Activated T-helper 1 cell treated with anti-CD3 and anti-CD28 coated beads, Interleukin-12 subunit alpha, Interleukin-12 subunit beta, Interleukin-2, Interleukin-4 antibody, amounts not matched to agents 30 ng/mL and 10 ng/mL and 1 ng/mL, durations not matched to agents 14 hours and 24 hours and 36 hours (primary cell): ENCODE measurements at regions of chr2 and their contacts with region 1.

Region 1: GRCh38 chr2:55268907-55269644 is at the start of gene MTIF2:
- DNase-seq: peak; percentile 87
- H3K4me3 Mint-ChIP-seq: peak within 1 kb of the TSS; percentile 93
- H3K27ac Mint-ChIP-seq: peak within 1 kb of the TSS; percentile 85
- H3K4me1 Mint-ChIP-seq: peaks cover 14% of the 10 kb centered on the region
- H3K27me3 Mint-ChIP-seq: no peaks in the 10 kb centered on the region
- total RNA-seq, gene MTIF2: 42.3 and 44.1 TPM in 2 replicates

Region 2: DNA sequence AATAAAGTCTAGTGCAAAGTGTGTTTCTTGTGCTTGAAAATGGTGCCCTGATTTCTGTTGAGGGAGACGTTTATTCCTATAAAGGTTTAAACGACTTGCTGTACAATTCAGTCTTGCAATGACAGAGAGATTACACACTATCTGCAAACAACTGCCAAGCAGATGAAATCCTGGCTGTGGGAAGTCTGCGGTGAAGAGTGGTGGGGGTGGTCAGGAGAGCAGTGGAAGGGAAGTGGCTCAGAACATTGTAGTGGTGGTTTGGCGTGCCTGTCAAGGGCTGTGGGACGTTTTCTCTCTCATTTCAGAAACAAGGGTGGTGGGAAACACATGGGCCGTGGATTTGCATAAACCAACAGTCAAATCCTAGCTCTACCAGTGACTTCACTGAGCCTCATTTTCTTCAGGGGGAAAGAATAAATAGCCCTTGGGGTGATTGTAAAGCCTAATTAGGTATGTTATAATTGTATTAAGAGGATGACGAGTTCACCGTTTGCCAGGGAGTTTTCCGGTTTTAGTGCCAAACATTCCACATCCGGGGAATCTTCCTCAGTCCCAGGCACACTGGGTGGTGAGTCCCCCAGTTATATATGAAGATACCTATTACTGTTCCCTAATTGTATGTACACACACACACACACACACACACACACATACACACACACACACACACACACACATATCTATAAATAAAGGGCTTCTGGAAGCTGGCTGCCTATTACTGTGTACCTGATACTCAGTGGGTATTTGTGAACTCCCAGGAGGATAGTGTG is 698.0 kb before region 1 on chr2:
- intact Hi-C with region 1: no loop called
- DNase-seq: peak; percentile 84
- H3K4me3 Mint-ChIP-seq: peak overlapping the region; percentile 70
- H3K27ac Mint-ChIP-seq: peak overlapping the region; percentile 92
- H3K4me1 Mint-ChIP-seq: peaks cover 91% of the 10 kb centered on the region
- H3K27me3 Mint-ChIP-seq: peaks cover 2% of the 10 kb centered on the region

Region 3: DNA sequence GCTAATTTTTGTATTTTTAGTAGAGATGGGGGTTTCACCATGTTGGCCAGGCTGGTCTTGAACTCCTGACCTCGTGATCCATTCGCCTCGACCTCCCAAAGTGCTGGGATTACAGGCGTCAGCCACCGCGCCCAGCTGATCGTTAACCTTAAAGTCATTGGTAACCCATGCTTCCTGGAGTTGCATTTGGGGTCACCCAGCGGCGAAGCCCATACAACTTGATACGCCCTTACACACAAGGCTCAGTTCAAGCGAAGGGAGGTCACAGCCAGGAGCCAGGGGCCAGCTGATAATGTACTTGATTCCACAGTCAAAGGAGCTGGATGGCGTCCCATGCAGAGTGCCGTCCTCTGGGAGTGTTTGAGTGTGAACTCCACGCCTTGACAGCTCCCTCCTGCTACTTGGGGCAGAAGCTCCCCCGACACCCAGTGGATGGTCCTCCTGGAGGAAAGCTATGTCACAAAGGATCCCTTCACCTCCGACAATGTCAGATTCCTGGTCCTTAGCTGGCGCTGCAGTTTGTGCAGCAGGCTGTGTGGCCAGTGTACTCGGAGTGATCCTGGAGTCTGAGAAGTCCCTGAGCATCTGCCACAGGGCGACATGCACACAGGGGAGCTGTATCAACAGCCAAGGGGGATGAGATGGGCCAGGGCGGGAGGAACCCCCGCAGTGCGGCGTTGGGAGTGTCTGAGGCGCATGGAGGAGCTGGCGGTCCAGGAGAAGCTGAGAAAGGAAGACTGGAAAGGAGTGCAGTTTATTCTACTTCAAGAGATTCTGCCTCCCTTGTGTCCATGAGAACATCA is 44.9 kb before region 1 on chr2:
- intact Hi-C with region 1: loop called (anchors 2 kb)
- DNase-seq: no peak
- H3K4me3 Mint-ChIP-seq: peak overlapping the region; percentile 71
- H3K27ac Mint-ChIP-seq: peak overlapping the region; percentile 67
- H3K4me1 Mint-ChIP-seq: peaks cover 46% of the 10 kb centered on the region
- H3K27me3 Mint-ChIP-seq: no peaks in the 10 kb centered on the region

Region 4: GRCh38 chr2:55282110-55282917 is 13.2 kb after region 1 on chr2:
- intact Hi-C with region 1: loop called (anchors 1 kb)
- DNase-seq: peak; percentile 85
- H3K4me3 Mint-ChIP-seq: peak overlapping the region; percentile 89
- H3K27ac Mint-ChIP-seq: peak overlapping the region; percentile 93
- H3K4me1 Mint-ChIP-seq: peaks cover 12% of the 10 kb centered on the region
- H3K27me3 Mint-ChIP-seq: peaks cover 2% of the 10 kb centered on the region

Region 5: GRCh38 chr2:55431982-55432627 is 163.0 kb after region 1 on chr2:
- intact Hi-C with region 1: loop called (anchors 1 kb)
- DNase-seq: no peak
- H3K4me3 Mint-ChIP-seq: no peak overlapping the region
- H3K27ac Mint-ChIP-seq: no peak overlapping the region
- H3K4me1 Mint-ChIP-seq: peaks cover 11% of the 10 kb centered on the region
- H3K27me3 Mint-ChIP-seq: peaks cover 9% of the 10 kb centered on the region